IMR-90 (cell line): ENCODE measurements at regions of chr13 and their contacts with region 1.

Region 1: DNA sequence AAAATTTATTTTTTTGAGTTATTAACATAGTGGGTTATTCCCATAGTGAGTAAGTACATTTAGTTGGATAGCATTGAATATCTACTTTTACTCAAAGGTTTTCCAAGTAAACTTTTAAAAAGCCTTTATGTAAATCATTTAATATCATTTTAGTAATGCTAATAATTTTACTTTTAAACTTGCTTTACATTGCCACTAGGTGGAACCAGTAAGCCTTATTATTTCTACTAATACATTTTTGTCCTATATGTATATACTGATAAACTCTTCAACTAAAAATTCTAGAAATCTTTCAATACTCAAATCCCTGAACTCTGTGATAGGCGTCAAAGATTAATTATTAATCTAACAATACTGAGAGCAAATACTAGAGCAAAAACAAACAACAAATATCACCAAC is 1709.2 kb upstream of the PCDH20 start:
- DNase-seq: peak; percentile 60
- ATAC-seq: peak; percentile 59; the same call in 1 of the 2 replicates
- H3K4me3 ChIP-seq: no peak overlapping the region
- H3K27ac ChIP-seq: no peak overlapping the region
- H3K4me1 ChIP-seq: no peaks in the 10 kb centered on the region
- H3K27me3 ChIP-seq: no peaks in the 10 kb centered on the region
- CTCF ChIP-seq: peak; percentile 54
- POLR2A ChIP-seq: no peak
- RAD21 ChIP-seq: peak; percentile 60

Region 2: GRCh38 chr13:62387647-62388046 is 737.2 kb before region 1 on chr13:
- CTCF ChIA-PET with region 1: no interaction called
- POLR2A ChIA-PET with region 1: no interaction called
- dilution Hi-C with region 1: no loop called
- in situ Hi-C with region 1: no loop called
- intact Hi-C with region 1: loop called (anchors 10 kb)
- DNase-seq: peak; percentile 36
- ATAC-seq: peak; percentile 14; the same call in 1 of the 2 replicates
- H3K4me3 ChIP-seq: no peak overlapping the region
- H3K27ac ChIP-seq: no peak overlapping the region
- H3K4me1 ChIP-seq: no peaks in the 10 kb centered on the region
- H3K27me3 ChIP-seq: no peaks in the 10 kb centered on the region
- CTCF ChIP-seq: peak; percentile 48
- POLR2A ChIP-seq: no peak
- RAD21 ChIP-seq: peak; percentile 47

Region 3: GRCh38 chr13:63435668-63436287 is 310.9 kb after region 1 on chr13:
- CTCF ChIA-PET with region 1: no interaction called
- POLR2A ChIA-PET with region 1: no interaction called
- dilution Hi-C with region 1: no loop called
- in situ Hi-C with region 1: no loop called
- intact Hi-C with region 1: loop called (anchors 10 kb)
- DNase-seq: peak; percentile 100
- ATAC-seq: peak; percentile 76
- H3K4me3 ChIP-seq: no peak overlapping the region
- H3K27ac ChIP-seq: peak overlapping the region; percentile 80
- H3K4me1 ChIP-seq: peaks cover 9% of the 10 kb centered on the region
- H3K27me3 ChIP-seq: no peaks in the 10 kb centered on the region
- CTCF ChIP-seq: no peak
- POLR2A ChIP-seq: peak; percentile 12; the same call in 1 of the 2 replicates
- RAD21 ChIP-seq: no peak

Region 4: GRCh38 chr13:64154514-64154913 is 1029.7 kb after region 1 on chr13:
- CTCF ChIA-PET with region 1: no interaction called
- POLR2A ChIA-PET with region 1: no interaction called
- dilution Hi-C with region 1: no loop called
- in situ Hi-C with region 1: no loop called
- intact Hi-C with region 1: loop called (anchors 10 kb)
- DNase-seq: peak; percentile 40
- ATAC-seq: peak; percentile 62; the same call in 1 of the 2 replicates
- H3K4me3 ChIP-seq: no peak overlapping the region
- H3K27ac ChIP-seq: no peak overlapping the region
- H3K4me1 ChIP-seq: no peaks in the 10 kb centered on the region
- H3K27me3 ChIP-seq: no peaks in the 10 kb centered on the region
- CTCF ChIP-seq: peak; percentile 51
- POLR2A ChIP-seq: no peak
- RAD21 ChIP-seq: peak; percentile 50

Region 5: DNA sequence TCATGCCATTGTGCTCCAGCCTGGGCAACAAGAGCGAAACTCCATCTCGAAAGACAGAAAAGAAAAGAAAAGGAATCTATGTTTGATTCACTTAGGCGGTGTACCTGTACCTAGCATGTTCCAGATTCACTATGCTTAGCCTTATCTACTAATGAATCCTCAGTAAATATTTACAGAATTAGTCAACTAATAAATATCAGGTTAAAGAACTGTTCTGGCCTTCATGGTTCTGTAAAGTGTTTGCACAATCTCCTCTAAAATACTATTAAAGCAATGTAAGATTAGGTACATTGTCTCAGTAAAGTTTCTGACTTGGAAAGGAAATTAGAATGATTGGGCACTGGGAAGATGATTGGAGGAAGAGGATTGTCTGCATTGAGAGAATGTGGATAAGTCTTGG is 1334.9 kb after region 1 on chr13:
- CTCF ChIA-PET with region 1: no interaction called
- POLR2A ChIA-PET with region 1: no interaction called
- dilution Hi-C with region 1: no loop called
- in situ Hi-C with region 1: no loop called
- intact Hi-C with region 1: loop called (anchors 10 kb)
- DNase-seq: no peak
- ATAC-seq: no peak
- H3K4me3 ChIP-seq: no peak overlapping the region
- H3K27ac ChIP-seq: no peak overlapping the region
- H3K4me1 ChIP-seq: no peaks in the 10 kb centered on the region
- H3K27me3 ChIP-seq: no peaks in the 10 kb centered on the region
- CTCF ChIP-seq: no peak
- POLR2A ChIP-seq: no peak
- RAD21 ChIP-seq: no peak